ENCODE measurements at regions of chr14 and their contacts with region 1.

Region 1: GRCh38 chr14:67934008-67934481 is 114.5 kb downstream of the RAD51B start:
- DNase-seq: peak; percentile 40
- H3K4me3 ChIP-seq: no peak overlapping the region
- H3K27ac ChIP-seq: peak overlapping the region in 1 of 2 donors; percentile 57
- H3K4me1 ChIP-seq: no peaks in the 10 kb centered on the region
- H3K27me3 ChIP-seq: no peaks in the 10 kb centered on the region
- CTCF ChIP-seq: peak; percentile 64 to 91 (median 86)
- POLR2A ChIP-seq: no peak

Region 2: GRCh38 chr14:67370830-67371229 is 563.2 kb before region 1 on chr14:
- intact Hi-C with region 1: no loop called
- DNase-seq: no peak
- H3K4me3 ChIP-seq: no peak overlapping the region
- H3K27ac ChIP-seq: no peak overlapping the region
- H3K4me1 ChIP-seq: no peaks in the 10 kb centered on the region
- H3K27me3 ChIP-seq: no peaks in the 10 kb centered on the region
- CTCF ChIP-seq: no peak
- POLR2A ChIP-seq: no peak

Region 3: DNA sequence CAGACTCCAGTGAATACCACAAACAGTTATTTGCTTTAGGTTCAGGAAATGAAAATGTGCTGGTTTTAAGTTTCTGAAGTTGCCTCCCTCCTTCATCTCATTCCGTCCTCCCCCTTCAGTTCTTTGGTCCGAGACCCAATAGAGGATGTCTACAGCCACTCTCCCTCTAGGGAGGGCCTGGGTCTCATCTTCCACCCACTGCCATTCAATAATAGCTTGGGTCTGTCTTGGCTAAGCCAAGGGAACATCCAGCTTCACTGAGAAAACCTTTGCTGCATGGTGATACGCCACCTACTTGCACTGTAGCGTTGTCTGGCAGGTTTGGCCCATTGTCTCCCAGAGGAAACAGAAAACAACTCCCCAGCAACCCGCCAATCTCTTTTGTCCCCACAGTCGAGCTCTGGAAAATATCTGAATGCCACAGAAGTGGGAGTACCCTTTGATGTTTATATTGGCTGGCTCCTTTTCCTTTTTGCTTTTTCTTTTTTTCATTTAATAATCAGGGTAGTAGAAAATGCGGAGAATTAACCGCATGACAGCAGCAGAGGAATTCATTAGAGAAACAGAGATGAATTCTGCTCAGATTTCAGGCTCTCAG is 265.6 kb after region 1 on chr14:
- intact Hi-C with region 1: no loop called
- DNase-seq: peak; percentile 61
- H3K4me3 ChIP-seq: no peak overlapping the region
- H3K27ac ChIP-seq: peak overlapping the region; percentile 15 to 81
- H3K4me1 ChIP-seq: peaks cover 19% of the 10 kb centered on the region
- H3K27me3 ChIP-seq: no peaks in the 10 kb centered on the region
- CTCF ChIP-seq: no peak
- POLR2A ChIP-seq: no peak

Region 4: GRCh38 chr14:68824517-68825347 is 890.7 kb after region 1 on chr14:
- intact Hi-C with region 1: loop called (anchors 5 kb)
- DNase-seq: peak; percentile 93
- H3K4me3 ChIP-seq: no peak overlapping the region
- H3K27ac ChIP-seq: no peak overlapping the region
- H3K4me1 ChIP-seq: no peaks in the 10 kb centered on the region
- H3K27me3 ChIP-seq: no peaks in the 10 kb centered on the region
- CTCF ChIP-seq: peak; percentile 73 to 85 (median 77)
- POLR2A ChIP-seq: no peak